ENCODE measurements at regions of chr20 and their contacts with region 1.

Region 1: DNA sequence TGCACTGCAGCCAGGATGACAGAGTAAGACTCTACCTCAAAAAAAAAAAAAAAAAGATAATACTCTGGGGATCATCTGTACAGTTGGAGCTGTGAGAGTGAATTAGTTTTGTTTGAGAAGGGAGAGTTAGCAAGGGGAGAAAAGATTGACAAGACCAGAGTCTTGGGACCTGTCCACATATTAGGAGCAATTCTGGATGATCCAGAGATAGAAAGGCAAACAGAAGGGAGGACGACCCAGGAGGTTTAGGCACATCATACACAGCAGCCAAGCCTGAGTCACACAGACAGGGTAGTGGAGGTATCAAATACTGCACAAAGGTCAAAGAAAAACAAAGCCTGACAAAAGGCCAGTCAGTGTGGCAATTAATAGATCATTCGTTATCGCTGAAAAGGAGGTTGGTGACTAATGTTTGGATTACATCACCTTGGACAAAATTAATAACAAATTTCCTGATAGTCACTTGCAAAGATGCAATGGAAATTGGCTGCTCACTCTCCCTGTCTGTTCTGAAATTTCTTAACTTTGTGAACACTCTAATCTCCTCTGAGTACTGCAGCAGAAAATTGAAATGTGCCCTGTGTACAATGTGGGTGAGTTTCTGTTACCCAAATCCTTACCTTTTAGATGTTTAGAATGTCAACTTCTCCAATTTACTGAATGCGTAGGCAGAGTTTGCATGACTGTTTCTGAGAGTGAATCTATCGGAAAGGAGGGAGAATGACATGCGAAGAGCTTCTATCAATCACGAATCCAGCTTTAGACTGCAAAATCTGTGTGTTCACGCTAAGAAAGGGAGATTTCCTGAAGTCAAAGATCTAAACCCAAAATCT is 105.4 kb downstream of the TSHZ2 start:
- DNase-seq: no peak
- H3K4me3 Mint-ChIP-seq: no peak overlapping the region
- H3K27ac Mint-ChIP-seq: no peak overlapping the region
- H3K4me1 Mint-ChIP-seq: peaks cover 28% of the 10 kb centered on the region
- H3K27me3 Mint-ChIP-seq: no peaks in the 10 kb centered on the region

Region 2: GRCh38 chr20:52305858-52306257 is 771.7 kb before region 1 on chr20:
- intact Hi-C with region 1: loop called (anchors 2 kb)
- DNase-seq: peak; percentile 27
- H3K4me3 Mint-ChIP-seq: no peak overlapping the region
- H3K27ac Mint-ChIP-seq: peak overlapping the region; percentile 65
- H3K4me1 Mint-ChIP-seq: peaks cover 41% of the 10 kb centered on the region
- H3K27me3 Mint-ChIP-seq: no peaks in the 10 kb centered on the region

Region 3: DNA sequence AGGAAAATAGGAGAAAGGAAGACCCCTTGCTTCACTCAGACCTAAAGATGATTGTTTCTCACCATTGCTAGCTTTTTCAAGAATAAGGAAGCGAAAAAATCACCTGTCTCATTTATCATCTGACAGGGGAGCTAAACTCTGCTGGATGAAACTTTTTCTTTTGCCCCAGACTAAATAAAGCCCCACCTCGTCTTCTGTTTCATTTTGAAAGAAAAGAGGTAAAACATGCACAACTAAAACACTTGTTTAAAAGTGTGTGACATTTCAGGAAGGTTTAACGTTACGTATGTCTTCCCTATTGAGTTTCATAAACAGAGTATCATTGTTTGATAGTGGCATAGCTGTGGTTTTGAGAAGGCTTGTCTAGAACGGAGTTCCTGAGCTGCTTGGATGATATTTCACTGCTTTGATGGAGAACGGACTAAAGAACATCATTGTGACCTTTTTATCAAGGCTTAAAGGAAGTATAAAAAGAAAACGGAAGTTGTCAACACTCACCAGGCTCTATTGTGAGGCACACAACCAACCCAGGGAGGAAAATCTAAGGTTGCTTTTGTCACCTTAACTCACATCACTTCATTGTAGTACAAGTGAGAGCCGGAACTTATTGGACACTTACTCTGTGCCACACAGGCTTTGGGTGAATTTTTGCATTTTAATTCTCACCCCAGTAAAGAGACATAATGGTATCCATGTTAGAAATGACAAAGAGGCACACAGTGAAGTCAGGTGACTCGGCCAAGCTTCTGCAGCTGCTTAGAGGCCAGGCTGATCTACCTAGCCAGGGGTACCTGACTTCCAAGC is 75.9 kb before region 1 on chr20:
- intact Hi-C with region 1: loop called (anchors 2 kb)
- DNase-seq: no peak
- H3K4me3 Mint-ChIP-seq: peak overlapping the region; percentile 74
- H3K27ac Mint-ChIP-seq: peak overlapping the region; percentile 92
- H3K4me1 Mint-ChIP-seq: peaks cover 33% of the 10 kb centered on the region
- H3K27me3 Mint-ChIP-seq: no peaks in the 10 kb centered on the region

Region 4: DNA sequence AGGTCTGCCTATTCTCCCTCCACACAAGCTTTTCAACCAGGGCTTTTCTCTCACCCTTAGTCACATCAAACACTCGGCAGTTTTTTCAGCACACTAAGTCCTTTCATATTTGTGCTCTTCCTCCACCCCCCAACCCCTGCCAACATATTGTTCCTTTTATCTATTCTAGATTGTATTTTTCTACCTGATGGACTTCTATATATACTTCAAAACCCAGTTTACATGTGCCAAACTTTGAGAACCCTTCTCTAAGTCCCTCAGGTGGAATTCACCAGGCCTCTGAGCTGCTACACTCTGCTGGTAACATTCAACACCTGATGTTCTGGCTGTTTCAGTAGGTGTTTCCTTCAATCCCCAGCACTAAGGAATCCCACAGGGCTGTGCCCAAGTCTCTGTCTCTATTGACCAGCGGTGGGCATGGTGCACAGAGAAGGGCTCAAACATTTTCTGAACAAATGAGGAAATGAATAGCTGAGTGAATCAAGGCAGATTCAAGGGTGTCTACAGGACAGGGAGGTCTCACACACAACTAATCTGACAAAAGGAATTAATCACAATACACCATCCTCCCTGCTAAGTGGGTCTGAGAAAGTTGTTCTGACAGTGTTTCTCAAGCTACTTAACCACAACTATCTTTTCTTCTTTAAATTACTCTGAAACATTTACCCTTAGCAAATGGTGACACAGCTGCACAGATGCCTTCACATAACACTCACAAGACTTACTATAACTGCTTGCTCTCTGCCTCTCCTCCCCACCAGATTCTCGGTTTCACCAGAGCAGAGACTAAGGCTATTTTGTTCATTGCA is 61.1 kb after region 1 on chr20:
- intact Hi-C with region 1: loop called (anchors 2 kb)
- DNase-seq: no peak
- H3K4me3 Mint-ChIP-seq: no peak overlapping the region
- H3K27ac Mint-ChIP-seq: no peak overlapping the region
- H3K4me1 Mint-ChIP-seq: peaks cover 21% of the 10 kb centered on the region
- H3K27me3 Mint-ChIP-seq: no peaks in the 10 kb centered on the region

Region 5: GRCh38 chr20:53152221-53152620 is 74.6 kb after region 1 on chr20:
- intact Hi-C with region 1: no loop called
- DNase-seq: no peak
- H3K4me3 Mint-ChIP-seq: no peak overlapping the region
- H3K27ac Mint-ChIP-seq: no peak overlapping the region
- H3K4me1 Mint-ChIP-seq: peaks cover 27% of the 10 kb centered on the region
- H3K27me3 Mint-ChIP-seq: peaks cover 5% of the 10 kb centered on the region

Region 6: DNA sequence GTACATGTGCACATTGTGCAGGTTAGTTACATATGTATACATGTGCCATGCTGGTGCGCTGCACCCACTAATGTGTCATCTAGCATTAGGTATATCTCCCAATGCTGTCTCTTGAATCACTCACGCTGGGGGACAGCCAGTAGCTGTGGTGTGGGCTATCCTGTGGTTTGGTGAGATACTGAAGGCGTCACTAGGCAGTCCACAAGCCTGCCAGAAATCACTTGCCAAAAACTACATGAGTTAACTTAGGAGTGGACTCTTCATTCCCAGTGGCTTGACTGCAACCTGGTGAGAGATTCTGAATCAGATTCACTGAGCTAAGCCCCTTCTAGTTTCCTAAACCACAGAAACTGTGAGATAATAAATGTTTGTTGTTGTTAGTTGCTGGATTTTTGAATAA is 85.9 kb after region 1 on chr20:
- intact Hi-C with region 1: loop called (anchors 1 kb)
- DNase-seq: no peak
- H3K4me3 Mint-ChIP-seq: no peak overlapping the region
- H3K27ac Mint-ChIP-seq: no peak overlapping the region
- H3K4me1 Mint-ChIP-seq: peaks cover 23% of the 10 kb centered on the region
- H3K27me3 Mint-ChIP-seq: no peaks in the 10 kb centered on the region